Naive thymus-derived CD4-positive, alpha-beta T cell (primary cell): ENCODE measurements at regions of chr12 and their contacts with region 1.

Region 1: DNA sequence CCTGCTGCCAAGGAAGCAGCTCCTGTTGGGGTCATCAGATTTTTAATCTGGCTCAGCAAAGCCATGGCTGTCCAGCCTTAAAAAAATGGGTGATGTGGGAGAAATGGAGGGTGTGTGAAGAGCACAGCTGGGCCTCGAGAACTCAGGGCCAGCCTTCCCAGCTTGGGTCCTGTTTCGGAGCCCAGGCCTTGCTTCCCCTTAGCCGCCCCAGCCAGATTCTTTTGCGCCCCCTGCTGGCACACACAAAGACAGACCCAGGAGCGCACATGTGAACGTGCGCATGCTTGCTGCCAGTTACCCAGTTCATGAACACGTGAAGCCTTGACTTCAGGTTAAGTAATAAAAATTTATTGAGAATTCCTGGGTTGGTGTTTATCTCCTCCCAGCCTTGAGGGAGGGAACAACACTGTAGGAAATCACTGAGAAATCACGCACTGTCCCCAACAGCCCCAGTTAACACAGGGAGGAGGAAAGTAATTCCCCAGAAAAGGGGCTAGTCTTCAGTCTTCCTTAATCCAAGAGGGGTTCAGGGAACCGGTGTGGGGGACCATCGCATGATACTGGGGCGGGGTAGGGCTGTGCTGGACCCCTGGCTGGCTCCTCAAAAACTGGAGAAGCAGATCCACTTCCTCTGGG is 5.3 kb downstream of the PHB2 start:
- DNase-seq: peak; percentile 77 to 89 (median 85)
- ATAC-seq: peak; percentile 69
- H3K4me3 ChIP-seq: no peak overlapping the region
- H3K4me3 Mint-ChIP-seq: peak overlapping the region in 3 of 10 donors; percentile 9 to 23 (median 17)
- H3K27ac ChIP-seq: peak overlapping the region; percentile 68
- H3K27ac Mint-ChIP-seq: peak overlapping the region; percentile 75 to 95 (median 87)
- H3K4me1 ChIP-seq: peaks cover 45 to 60% of the 10 kb centered on the region in 2 donors
- H3K4me1 Mint-ChIP-seq: peaks cover 33 to 59% (median 56%) of the 10 kb centered on the region in 7 donors
- H3K27me3 ChIP-seq: no peaks in the 10 kb centered on the region
- H3K27me3 Mint-ChIP-seq: no peaks in the 10 kb centered on the region

Region 2: GRCh38 chr12:6890789-6891645 is 74.1 kb before region 1 on chr12:
- CTCF ChIA-PET with region 1: interaction called, 4 read pairs
- POLR2A ChIA-PET with region 1: interaction called, 3 read pairs
- intact Hi-C with region 1: loop called (anchors 1 kb)
- DNase-seq: peak; percentile 95 to 100 (median 97)
- ATAC-seq: peak; percentile 96
- H3K4me3 ChIP-seq: peak overlapping the region; percentile 93
- H3K4me3 Mint-ChIP-seq: peak overlapping the region; percentile 78 to 86 (median 84)
- H3K27ac ChIP-seq: peak overlapping the region; percentile 86
- H3K27ac Mint-ChIP-seq: peak overlapping the region; percentile 82 to 94 (median 90)
- H3K4me1 ChIP-seq: peaks cover 6 to 10% of the 10 kb centered on the region in 2 donors
- H3K4me1 Mint-ChIP-seq: peaks cover 0 to 31% (median 11%) of the 10 kb centered on the region in 7 donors
- H3K27me3 ChIP-seq: no peaks in the 10 kb centered on the region
- H3K27me3 Mint-ChIP-seq: no peaks in the 10 kb centered on the region

Region 3: DNA sequence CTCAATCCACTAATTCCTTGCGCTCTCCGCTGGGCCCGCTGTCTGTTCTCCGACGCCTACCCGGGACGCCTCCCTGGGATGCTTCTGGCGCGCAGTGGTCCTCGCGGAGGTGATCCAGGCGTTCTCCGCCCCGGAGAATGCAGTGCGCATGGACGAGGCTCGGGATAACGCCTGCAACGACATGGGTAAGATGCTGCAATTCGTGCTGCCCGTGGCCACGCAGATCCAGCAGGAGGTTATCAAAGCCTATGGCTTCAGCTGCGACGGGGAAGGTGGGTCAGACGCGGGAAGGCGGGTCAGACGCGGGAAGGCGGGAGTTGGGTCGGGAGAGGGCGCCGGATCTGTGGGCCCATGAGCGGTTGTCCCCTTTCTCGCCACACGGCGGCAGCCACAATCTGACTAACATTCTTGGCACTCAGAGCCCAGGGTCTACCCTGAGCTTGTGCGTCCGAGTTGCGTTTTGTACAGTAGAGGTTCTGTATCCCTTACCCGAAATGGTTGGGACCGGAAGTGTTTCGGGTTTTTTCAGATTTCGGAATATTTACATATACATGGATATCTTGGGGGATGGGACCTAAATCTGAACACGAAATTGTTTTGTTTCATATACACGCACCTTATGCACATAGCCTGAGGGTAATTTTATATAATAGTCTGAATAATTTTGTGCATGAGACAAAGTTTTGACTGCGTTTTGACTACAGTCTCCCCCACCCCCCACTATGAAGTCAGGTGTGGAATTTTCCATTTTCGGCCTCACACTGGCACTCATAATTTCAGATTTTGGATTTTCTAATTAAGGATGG is 20.6 kb before region 1 on chr12:
- CTCF ChIA-PET with region 1: interaction called, 460 read pairs
- POLR2A ChIA-PET with region 1: interaction called, 1,270 read pairs
- intact Hi-C with region 1: loop called (anchors 1 kb)
- DNase-seq: peak; percentile 70 to 87 (median 84)
- ATAC-seq: peak; percentile 65
- H3K4me3 ChIP-seq: peak overlapping the region; percentile 94
- H3K4me3 Mint-ChIP-seq: peak overlapping the region; percentile 88 to 100 (median 96)
- H3K27ac ChIP-seq: peak overlapping the region; percentile 95
- H3K27ac Mint-ChIP-seq: peak overlapping the region; percentile 95 to 100 (median 98)
- H3K4me1 ChIP-seq: peaks cover 56% of the 10 kb centered on the region in 2 donors
- H3K4me1 Mint-ChIP-seq: peaks cover 42 to 75% (median 60%) of the 10 kb centered on the region in 7 donors
- H3K27me3 ChIP-seq: no peaks in the 10 kb centered on the region
- H3K27me3 Mint-ChIP-seq: no peaks in the 10 kb centered on the region

Region 4: GRCh38 chr12:7042842-7043241 is 77.7 kb after region 1 on chr12:
- CTCF ChIA-PET with region 1: no interaction called
- POLR2A ChIA-PET with region 1: no interaction called
- intact Hi-C with region 1: loop called in 1 of 2 experiments (anchors 2 kb)
- DNase-seq: peak in 4 of 9 donors; percentile 5 to 12 (median 11)
- ATAC-seq: peak; percentile 40
- H3K4me3 ChIP-seq: no peak overlapping the region
- H3K4me3 Mint-ChIP-seq: no peak overlapping the region
- H3K27ac ChIP-seq: no peak overlapping the region
- H3K27ac Mint-ChIP-seq: no peak overlapping the region
- H3K4me1 ChIP-seq: no peaks in the 10 kb centered on the region
- H3K4me1 Mint-ChIP-seq: peaks cover 0 to 19% (median 15%) of the 10 kb centered on the region in 7 donors
- H3K27me3 ChIP-seq: no peaks in the 10 kb centered on the region
- H3K27me3 Mint-ChIP-seq: peaks cover 0 to 5% (median 0%) of the 10 kb centered on the region in 5 donors

Region 5: DNA sequence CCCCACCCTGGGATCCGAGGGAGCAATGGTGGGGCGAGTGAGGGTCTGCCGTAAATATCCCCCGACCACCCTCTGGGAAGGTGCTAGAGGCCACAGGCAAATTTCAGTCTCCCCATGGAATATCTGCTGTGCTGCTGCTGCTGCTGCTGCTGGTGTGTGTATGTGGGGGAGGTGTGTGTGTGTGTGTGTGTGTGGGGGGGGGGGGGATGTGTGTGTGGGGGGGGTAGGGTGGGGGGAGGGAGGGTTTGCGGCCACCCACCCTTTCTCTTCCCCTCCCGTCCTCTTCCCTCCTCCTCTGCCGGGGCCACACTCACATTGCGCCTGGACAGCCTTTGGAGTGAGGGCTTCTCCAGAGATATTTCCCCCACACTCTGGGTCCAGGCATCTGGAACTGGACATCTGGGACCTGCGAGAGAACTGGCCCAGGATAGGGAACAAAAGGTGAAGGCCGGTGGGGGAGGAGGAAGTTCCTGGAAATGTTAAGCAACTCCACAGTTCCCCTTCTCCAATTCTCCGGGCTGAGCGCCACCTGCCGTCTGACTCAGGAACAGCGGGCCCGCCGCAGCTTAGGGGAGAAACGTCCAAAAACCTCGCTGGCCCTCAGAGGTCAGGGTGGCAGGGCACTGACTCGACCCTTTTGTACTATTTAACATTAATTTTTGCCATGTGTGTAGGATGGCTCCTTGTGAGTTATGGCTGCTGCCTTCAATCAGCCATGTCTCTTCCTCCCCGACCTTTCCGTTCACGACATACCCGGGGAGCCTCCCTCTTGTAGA is 143.8 kb after region 1 on chr12 and contains the start of gene C1RL:
- CTCF ChIA-PET with region 1: interaction called, 12 read pairs
- POLR2A ChIA-PET with region 1: interaction called, 5 read pairs
- intact Hi-C with region 1: loop called (anchors 1 kb)
- DNase-seq: peak; percentile 50 to 88 (median 65)
- ATAC-seq: peak; percentile 69
- H3K4me3 ChIP-seq: peak within 1 kb of the TSS; percentile 95
- H3K4me3 Mint-ChIP-seq: peak within 1 kb of the TSS; percentile 90 to 98 (median 94)
- H3K27ac ChIP-seq: peak within 1 kb of the TSS; percentile 79
- H3K27ac Mint-ChIP-seq: peak within 1 kb of the TSS; percentile 84 to 95 (median 93)
- H3K4me1 ChIP-seq: peaks cover 6% of the 10 kb centered on the region in 2 donors
- H3K4me1 Mint-ChIP-seq: peaks cover 29 to 64% (median 43%) of the 10 kb centered on the region in 7 donors
- H3K27me3 ChIP-seq: no peaks in the 10 kb centered on the region
- H3K27me3 Mint-ChIP-seq: no peaks in the 10 kb centered on the region
- total RNA-seq, gene C1RL: 18.5 to 38.6 (median 24.4) TPM